GM10248 (cell line): ENCODE measurements at regions of chr17 and their contacts with region 1.

Region 1: GRCh38 chr17:44775136-44775837 is 16.5 kb downstream of the ADAM11 start:
- DNase-seq: peak; percentile 99
- CTCF ChIP-seq: no peak

Region 2: DNA sequence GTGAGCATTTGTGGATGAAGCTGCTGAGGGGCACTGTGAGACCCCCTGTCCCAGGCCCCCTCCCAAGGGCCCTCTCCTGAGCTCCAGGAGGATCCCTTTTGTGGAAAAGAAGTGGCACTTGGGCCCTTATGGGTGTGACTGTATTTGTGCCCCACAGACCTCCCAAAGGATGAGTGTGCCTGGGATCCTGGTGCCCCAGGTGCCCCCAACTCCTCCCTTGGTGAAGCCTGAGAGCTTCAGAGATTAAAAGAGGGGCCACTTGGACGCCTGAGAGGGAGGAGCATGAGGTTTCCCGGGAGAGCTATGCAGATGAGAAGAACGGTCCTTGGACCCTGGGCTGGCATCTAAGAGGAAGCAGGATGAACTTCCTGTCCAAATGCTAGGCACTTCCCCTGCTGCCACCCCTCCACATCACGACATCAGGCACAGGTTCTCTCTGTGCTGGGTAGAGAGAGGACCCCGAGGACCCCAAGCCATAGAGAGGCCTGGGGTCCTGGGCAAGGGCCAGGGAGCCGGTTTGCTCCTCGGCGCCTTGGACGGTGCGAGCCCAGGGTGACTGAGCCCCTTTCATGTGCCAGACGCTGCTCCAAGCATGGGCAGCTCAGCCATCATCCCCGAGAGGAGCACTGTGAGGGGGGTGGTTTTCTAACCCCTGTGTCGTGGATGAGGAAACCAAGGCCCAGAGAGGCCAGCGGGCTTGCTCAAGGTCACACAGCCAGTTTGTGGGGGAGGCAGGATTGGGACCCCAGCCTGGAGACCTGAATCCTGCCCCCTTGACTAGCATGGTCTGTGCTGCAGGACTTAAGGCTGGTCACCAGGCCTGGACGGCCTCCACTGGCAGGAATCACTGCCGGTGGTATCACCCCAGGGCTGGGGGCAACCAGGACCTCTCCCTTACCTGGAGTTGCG is 22.1 kb before region 1 on chr17:
- CTCF ChIA-PET with region 1: interaction called, 10 read pairs
- POLR2A ChIA-PET with region 1: no interaction called
- DNase-seq: no peak
- CTCF ChIP-seq: no peak

Region 3: GRCh38 chr17:44794851-44795413 is 19.6 kb after region 1 on chr17:
- CTCF ChIA-PET with region 1: interaction called, 33 read pairs
- POLR2A ChIA-PET with region 1: no interaction called
- DNase-seq: no peak
- CTCF ChIP-seq: no peak

Region 4: DNA sequence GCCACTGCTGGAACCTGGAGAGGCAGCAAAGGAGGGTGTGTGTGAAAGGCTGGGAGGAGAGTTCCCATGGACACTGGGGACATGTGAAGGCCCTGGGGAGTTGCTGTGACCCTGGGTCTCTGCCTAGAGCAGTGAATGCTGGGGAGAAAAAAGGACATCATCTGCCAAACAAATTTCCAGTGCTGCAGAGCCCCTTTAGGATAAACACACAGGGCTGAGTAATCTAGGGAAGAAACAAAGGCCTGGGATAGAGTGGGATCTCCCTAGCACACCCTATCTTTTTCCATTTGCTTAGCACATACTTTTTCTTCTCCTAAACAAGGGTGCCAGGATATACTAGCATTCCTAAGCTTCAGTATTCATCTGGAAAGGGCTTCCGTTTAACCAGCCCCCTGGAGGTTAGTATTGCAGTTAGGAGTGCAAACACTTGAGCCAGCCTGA is 69.1 kb after region 1 on chr17:
- CTCF ChIA-PET with region 1: interaction called, 34 read pairs
- POLR2A ChIA-PET with region 1: no interaction called
- DNase-seq: no peak
- CTCF ChIP-seq: no peak

Region 5: DNA sequence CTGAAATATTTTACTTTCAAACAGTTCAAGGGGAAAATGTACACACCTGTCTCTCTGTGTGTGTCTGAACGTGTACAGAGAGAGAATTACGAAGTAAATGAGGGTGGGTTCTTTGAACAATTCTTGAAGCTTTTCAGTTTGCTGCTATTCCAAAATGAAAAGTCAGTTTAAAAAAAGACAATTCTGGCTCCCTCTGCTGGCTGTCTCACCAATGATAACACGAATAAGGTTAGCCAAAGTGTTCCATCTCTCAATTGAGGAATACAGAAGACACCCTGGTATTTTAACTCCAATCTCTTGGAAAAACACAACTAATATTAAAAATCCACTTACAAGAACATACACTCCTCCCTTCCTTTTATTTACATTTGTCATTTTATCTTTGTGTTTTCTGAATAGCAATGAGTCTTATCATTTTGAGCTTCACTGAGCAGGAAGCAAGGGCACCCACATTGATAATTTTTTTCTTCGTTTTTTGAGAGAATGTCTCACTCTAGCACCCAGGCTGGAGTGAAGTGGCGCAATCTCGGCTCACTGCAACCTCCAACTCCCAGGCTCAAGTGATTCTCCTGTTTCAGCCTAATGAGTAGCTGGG is 103.4 kb after region 1 on chr17:
- CTCF ChIA-PET with region 1: interaction called, 156 read pairs
- POLR2A ChIA-PET with region 1: no interaction called
- DNase-seq: peak; percentile 36
- CTCF ChIP-seq: peak; percentile 48

Region 6: GRCh38 chr17:44919885-44920564 is 144.7 kb after region 1 on chr17:
- CTCF ChIA-PET with region 1: interaction called, 10 read pairs
- POLR2A ChIA-PET with region 1: no interaction called
- DNase-seq: peak; percentile 90
- CTCF ChIP-seq: peak; percentile 92